Activated naive CD4-positive, alpha-beta T cell treated with anti-CD3 and anti-CD28 coated beads for 36 hours (primary cell): ENCODE measurements at regions of chr3 and their contacts with region 1.

Region 1: GRCh38 chr3:124552239-124552638 is 178.0 kb upstream of the UMPS start:
- DNase-seq: no peak
- H3K4me3 Mint-ChIP-seq: no peak overlapping the region
- H3K27ac Mint-ChIP-seq: no peak overlapping the region
- H3K4me1 Mint-ChIP-seq: peaks cover 3% of the 10 kb centered on the region
- H3K27me3 Mint-ChIP-seq: peaks cover 21% of the 10 kb centered on the region

Region 2: DNA sequence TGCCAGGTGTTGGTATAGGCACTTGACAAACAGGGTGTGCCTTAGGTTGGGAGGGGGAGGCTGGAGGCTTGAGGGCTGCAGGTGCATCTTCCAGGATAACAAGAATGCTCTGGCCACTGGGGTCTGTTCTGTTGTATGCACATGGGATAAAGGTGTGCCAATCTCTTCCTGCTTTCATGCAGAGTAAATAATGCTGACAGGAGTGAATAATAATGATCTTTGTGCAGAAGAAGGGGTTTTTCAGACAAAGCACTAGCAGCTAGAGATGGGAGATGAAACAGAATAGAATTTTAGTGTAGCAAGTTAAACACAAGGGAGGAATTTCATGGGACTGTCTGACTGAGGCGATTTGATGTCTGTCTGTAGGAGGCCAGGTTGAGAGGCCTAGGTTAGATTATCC is 558.4 kb before region 1 on chr3:
- CTCF ChIA-PET with region 1: no interaction called
- intact Hi-C with region 1: no loop called
- DNase-seq: no peak
- H3K4me3 Mint-ChIP-seq: no peak overlapping the region
- H3K27ac Mint-ChIP-seq: no peak overlapping the region
- H3K4me1 Mint-ChIP-seq: no peaks in the 10 kb centered on the region
- H3K27me3 Mint-ChIP-seq: peaks cover 21% of the 10 kb centered on the region

Region 3: GRCh38 chr3:124351430-124352148 is 200.7 kb before region 1 on chr3:
- CTCF ChIA-PET with region 1: interaction called, 3 read pairs
- intact Hi-C with region 1: loop called (anchors 1 kb)
- DNase-seq: peak; percentile 5
- H3K4me3 Mint-ChIP-seq: no peak overlapping the region
- H3K27ac Mint-ChIP-seq: no peak overlapping the region
- H3K4me1 Mint-ChIP-seq: no peaks in the 10 kb centered on the region
- H3K27me3 Mint-ChIP-seq: peaks cover 3% of the 10 kb centered on the region

Region 4: DNA sequence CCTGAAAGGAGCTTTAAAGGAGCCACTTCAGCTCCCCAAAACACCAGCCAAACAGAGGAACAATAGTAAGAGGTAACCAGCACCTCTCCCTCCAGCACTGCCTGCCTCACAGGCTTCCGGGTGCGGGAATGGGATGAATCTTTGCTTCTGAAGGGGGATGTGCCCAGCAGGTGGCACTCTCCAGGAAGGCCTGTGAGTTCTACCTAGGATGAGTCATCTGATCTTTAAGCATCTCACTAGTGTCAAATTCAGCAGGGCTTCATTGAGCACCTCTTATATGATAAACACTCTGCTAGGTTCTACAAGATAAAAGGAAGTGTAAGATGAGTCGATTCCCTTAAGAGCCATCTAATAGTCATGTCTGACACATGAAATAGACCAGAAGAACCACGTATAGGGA is 59.4 kb before region 1 on chr3:
- CTCF ChIA-PET with region 1: interaction called, 3 read pairs
- intact Hi-C with region 1: loop called (anchors 1 kb)
- DNase-seq: peak; percentile 30
- H3K4me3 Mint-ChIP-seq: no peak overlapping the region
- H3K27ac Mint-ChIP-seq: no peak overlapping the region
- H3K4me1 Mint-ChIP-seq: peaks cover 7% of the 10 kb centered on the region
- H3K27me3 Mint-ChIP-seq: peaks cover 15% of the 10 kb centered on the region